Activated T-helper 1 cell treated with anti-CD3 and anti-CD28 coated beads, Interleukin-12 subunit alpha, Interleukin-12 subunit beta, Interleukin-2, Interleukin-4 antibody, amounts not matched to agents 30 ng/mL and 10 ng/mL and 1 ng/mL, durations not matched to agents 14 hours and 24 hours and 36 hours (primary cell): ENCODE measurements at regions of chr2 and their contacts with region 1.

Region 1: GRCh38 chr2:86035883-86036668 is 69.6 kb downstream of the POLR1A start:
- DNase-seq: peak; percentile 65
- H3K4me3 Mint-ChIP-seq: peak overlapping the region; percentile 76
- H3K27ac Mint-ChIP-seq: peak overlapping the region; percentile 93
- H3K4me1 Mint-ChIP-seq: peaks cover 74% of the 10 kb centered on the region
- H3K27me3 Mint-ChIP-seq: no peaks in the 10 kb centered on the region

Region 2: DNA sequence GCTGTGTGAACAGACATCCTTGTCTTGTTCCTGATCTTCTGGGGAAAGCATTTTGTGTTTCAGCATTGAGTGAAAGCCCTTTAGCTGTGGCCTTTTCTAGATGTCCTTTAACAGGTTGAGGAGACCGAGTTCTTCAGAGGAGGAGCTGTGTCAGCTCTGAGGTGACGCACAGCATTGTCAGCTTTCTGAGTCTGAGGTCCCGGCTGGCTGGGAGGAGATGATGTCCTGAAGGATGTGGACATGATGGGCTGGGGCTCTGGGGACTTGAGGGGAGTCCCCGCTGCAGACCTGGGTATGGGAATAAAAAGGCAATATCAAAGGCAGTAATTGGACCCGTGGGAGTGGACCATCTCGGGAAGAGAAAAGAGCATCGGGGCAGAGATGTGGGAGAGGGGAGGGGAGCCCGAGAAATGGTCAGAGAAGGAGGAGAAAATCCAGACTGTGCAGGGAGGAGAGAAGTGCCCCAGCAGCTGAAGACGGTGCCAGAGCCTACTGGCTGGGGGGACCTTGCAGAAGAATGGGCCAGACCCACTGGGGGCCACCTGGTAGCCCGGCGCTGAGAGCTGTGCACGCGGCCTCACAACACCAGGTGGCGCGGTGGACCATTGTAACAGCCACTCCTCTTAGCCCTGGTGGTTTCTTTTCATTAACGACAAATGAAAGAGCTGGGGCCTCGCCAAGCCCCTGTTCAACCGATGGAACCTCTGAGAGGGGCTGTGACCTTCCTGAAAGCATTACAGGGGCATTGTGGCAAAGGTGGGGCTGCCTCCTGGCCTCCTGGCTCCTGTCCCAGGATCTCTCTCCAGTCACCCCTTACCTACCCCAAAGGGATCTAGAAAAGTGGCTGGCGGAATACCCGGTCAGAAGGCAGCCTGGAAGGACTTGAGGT is 208.8 kb before region 1 on chr2:
- intact Hi-C with region 1: loop called (anchors 1 kb)
- DNase-seq: peak; percentile 70
- H3K4me3 Mint-ChIP-seq: no peak overlapping the region
- H3K27ac Mint-ChIP-seq: no peak overlapping the region
- H3K4me1 Mint-ChIP-seq: peaks cover 40% of the 10 kb centered on the region
- H3K27me3 Mint-ChIP-seq: peaks cover 12% of the 10 kb centered on the region

Region 3: DNA sequence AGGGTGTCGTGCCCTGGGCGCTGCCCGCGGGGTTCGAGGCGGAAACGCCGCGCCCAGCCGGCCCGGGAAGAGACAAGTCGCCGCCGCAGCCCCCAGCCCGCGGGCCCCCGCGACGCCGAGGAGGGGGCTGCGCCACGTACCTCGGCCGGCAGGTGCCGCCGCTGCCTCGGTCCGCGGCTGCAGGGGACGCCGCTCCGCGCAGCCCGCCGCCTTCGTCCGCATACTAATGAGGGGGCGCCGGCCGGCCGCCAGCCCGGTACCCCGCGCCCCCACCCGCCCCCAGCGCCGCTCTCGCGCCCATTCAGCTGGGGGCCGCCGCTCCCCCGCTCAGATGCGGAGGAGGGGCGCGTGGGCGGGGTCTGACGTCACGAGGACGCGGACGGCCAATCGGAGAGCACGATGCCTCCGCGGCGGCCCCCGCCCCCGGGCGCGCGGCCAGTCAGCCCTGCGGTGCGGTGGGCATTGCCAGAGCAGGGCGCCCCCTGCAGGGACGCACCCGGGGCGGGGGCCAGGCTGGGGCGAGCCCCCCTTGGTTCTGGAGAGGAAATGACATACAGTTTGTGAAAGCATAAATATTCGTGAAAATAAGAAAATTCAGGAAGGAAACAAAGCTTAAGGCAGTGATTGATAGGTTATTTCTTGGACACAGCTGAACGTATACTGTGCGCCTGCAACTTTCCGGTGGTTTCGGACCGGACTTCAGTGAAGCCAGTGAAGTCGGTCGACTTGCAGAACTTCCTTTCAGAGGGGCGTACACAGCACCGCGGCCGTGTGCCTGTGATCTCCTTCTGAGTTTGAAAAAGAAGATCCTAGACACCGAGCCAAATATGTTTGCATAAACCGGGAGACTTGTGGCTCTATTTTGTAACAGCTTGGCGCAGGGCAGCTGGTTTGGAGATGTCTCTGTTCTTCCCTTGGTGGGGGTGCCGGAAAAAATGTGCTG is 147.1 kb before region 1 on chr2 and contains the start of gene ST3GAL5:
- intact Hi-C with region 1: loop called (anchors 1 kb)
- DNase-seq: peak; percentile 90
- H3K4me3 Mint-ChIP-seq: peak within 1 kb of the TSS; percentile 88
- H3K27ac Mint-ChIP-seq: peak within 1 kb of the TSS; percentile 87
- H3K4me1 Mint-ChIP-seq: peaks cover 73% of the 10 kb centered on the region
- H3K27me3 Mint-ChIP-seq: no peaks in the 10 kb centered on the region
- total RNA-seq, gene ST3GAL5: 17.4 and 18.9 TPM in 2 replicates

Region 4: GRCh38 chr2:85999061-85999831 is 36.8 kb before region 1 on chr2:
- intact Hi-C with region 1: loop called (anchors 1 kb)
- DNase-seq: peak; percentile 50
- H3K4me3 Mint-ChIP-seq: peak overlapping the region; percentile 50
- H3K27ac Mint-ChIP-seq: peak overlapping the region; percentile 84
- H3K4me1 Mint-ChIP-seq: peaks cover 74% of the 10 kb centered on the region
- H3K27me3 Mint-ChIP-seq: peaks cover 2% of the 10 kb centered on the region

Region 5: GRCh38 chr2:86105252-86105968 is 69.3 kb after region 1 on chr2 and contains the start of gene POLR1A:
- intact Hi-C with region 1: loop called (anchors 1 kb)
- DNase-seq: peak; percentile 84
- H3K4me3 Mint-ChIP-seq: peak within 1 kb of the TSS; percentile 91
- H3K27ac Mint-ChIP-seq: peak within 1 kb of the TSS; percentile 99
- H3K4me1 Mint-ChIP-seq: peaks cover 55% of the 10 kb centered on the region
- H3K27me3 Mint-ChIP-seq: no peaks in the 10 kb centered on the region
- total RNA-seq, gene POLR1A: 69.7 and 74.6 TPM in 2 replicates